Activated naive CD4-positive, alpha-beta T cell treated with anti-CD3 and anti-CD28 coated beads for 36 hours (primary cell): ENCODE measurements at regions of chr11 and their contacts with region 1.

Region 1: DNA sequence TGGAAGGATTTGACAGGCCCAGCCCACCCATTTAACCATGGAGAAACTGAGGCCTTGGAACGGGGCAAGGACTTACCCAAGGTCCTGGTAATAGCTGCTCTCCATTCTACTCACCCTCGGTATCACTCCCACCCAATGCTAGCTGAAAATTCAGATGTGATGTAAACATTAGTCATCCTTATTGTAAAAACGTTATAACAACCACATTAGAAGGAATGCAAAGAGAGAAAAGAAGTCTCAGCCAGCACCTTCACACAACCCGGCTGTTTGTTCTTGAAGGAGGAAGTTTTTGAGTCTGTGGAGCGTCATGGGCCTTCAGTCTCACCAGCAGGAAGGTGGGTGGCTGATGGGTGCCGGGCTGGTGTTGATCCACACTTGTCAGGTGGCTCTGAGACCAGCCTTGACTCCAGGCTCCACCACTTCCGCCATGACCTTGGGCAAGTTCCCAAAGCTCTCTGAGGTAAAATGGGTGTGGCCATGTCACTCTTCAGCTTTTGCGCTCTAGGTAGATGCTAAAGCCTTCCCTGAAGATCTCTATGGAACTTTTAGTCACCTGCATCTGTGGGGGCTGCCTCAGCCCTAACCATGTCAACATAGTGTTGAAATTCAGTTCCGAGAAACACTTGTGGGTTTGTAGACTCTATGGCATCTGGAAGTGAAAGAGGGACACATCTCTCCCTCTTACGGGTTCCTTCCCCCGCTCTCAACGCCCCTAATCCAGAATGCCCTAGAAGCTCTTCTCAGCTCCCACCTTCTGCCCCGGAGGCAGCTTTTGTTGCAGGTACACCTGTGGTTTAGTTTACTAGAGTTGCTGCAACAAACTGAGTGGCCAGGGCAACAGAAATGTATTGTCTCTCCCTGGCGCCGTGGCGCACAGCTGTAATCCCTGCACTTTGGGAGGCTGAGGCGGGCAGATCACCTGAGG is 14.8 kb downstream of the CD6 start:
- DNase-seq: peak; percentile 97
- H3K4me3 Mint-ChIP-seq: peak overlapping the region; percentile 77
- H3K27ac Mint-ChIP-seq: peak overlapping the region; percentile 97
- H3K4me1 Mint-ChIP-seq: peaks cover 90% of the 10 kb centered on the region
- H3K27me3 Mint-ChIP-seq: no peaks in the 10 kb centered on the region

Region 2: GRCh38 chr11:59560702-59561469 is 1425.4 kb before region 1 on chr11:
- CTCF ChIA-PET with region 1: no interaction called
- intact Hi-C with region 1: loop called (anchors 2 kb)
- DNase-seq: peak; percentile 90
- H3K4me3 Mint-ChIP-seq: peak overlapping the region; percentile 93
- H3K27ac Mint-ChIP-seq: peak overlapping the region; percentile 97
- H3K4me1 Mint-ChIP-seq: peaks cover 47% of the 10 kb centered on the region
- H3K27me3 Mint-ChIP-seq: peaks cover 4% of the 10 kb centered on the region

Region 3: DNA sequence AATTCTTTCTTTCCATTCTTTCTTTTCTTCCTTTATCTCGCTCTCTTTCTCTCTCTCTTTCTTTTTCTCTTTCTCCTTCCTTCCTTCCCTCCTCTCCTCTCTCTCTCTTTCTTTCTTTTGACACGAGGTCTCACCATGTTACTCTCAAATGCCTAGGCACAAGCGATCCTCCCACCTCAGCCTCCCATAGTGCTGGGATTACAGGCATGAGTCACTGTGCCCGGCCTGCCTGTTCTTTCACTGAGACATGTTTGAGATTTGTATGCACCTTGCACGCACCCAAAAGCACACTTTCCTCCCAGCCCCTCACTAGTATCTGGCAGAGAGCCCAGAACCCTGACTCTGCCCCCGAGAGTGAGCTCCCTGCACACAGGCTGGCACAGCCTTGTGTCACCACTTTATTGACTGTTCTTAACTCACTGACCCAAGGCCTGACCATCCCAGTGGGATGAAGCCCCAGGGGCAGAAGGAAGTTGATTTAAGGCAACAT is 42.1 kb after region 1 on chr11:
- CTCF ChIA-PET with region 1: interaction called, 3 read pairs
- intact Hi-C with region 1: loop called (anchors 1 kb)
- DNase-seq: peak; percentile 93
- H3K4me3 Mint-ChIP-seq: peak overlapping the region; percentile 87
- H3K27ac Mint-ChIP-seq: peak overlapping the region; percentile 100
- H3K4me1 Mint-ChIP-seq: peaks cover 82% of the 10 kb centered on the region
- H3K27me3 Mint-ChIP-seq: no peaks in the 10 kb centered on the region

Region 4: DNA sequence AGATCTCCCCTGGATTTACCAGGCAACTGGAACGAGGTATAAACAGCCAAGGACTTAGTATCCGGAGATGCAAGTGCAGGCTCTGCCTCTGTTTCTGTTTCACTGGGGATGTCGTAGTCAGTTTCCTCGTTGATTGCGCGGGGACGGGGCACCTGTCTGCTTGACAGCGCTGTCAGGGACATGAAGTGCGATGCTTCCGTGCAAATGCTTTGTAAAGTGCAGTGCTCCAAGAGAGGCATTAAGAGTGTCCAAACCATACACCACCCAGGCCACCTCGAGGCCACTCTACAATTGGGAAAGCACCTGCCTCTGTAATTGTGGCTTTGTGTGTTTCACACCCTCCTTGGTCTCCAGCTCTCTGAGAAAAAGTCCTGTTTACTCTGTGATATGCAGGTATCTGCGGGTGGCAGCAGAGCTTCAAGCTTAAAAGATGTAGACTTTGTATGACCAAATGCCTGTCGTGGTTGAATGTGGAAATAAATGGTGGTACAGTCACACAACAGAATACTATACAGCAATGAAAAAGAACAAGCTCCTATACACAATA is 97.4 kb after region 1 on chr11:
- CTCF ChIA-PET with region 1: interaction called, 6 read pairs
- intact Hi-C with region 1: loop called (anchors 5 kb)
- DNase-seq: peak; percentile 89
- H3K4me3 Mint-ChIP-seq: peak overlapping the region; percentile 76
- H3K27ac Mint-ChIP-seq: peak overlapping the region; percentile 99
- H3K4me1 Mint-ChIP-seq: peaks cover 70% of the 10 kb centered on the region
- H3K27me3 Mint-ChIP-seq: no peaks in the 10 kb centered on the region

Region 5: GRCh38 chr11:61102667-61103571 is 116.7 kb after region 1 on chr11:
- CTCF ChIA-PET with region 1: no interaction called
- intact Hi-C with region 1: loop called (anchors 2 kb)
- DNase-seq: peak; percentile 67
- H3K4me3 Mint-ChIP-seq: no peak overlapping the region
- H3K27ac Mint-ChIP-seq: no peak overlapping the region
- H3K4me1 Mint-ChIP-seq: peaks cover 31% of the 10 kb centered on the region
- H3K27me3 Mint-ChIP-seq: no peaks in the 10 kb centered on the region

Region 6: DNA sequence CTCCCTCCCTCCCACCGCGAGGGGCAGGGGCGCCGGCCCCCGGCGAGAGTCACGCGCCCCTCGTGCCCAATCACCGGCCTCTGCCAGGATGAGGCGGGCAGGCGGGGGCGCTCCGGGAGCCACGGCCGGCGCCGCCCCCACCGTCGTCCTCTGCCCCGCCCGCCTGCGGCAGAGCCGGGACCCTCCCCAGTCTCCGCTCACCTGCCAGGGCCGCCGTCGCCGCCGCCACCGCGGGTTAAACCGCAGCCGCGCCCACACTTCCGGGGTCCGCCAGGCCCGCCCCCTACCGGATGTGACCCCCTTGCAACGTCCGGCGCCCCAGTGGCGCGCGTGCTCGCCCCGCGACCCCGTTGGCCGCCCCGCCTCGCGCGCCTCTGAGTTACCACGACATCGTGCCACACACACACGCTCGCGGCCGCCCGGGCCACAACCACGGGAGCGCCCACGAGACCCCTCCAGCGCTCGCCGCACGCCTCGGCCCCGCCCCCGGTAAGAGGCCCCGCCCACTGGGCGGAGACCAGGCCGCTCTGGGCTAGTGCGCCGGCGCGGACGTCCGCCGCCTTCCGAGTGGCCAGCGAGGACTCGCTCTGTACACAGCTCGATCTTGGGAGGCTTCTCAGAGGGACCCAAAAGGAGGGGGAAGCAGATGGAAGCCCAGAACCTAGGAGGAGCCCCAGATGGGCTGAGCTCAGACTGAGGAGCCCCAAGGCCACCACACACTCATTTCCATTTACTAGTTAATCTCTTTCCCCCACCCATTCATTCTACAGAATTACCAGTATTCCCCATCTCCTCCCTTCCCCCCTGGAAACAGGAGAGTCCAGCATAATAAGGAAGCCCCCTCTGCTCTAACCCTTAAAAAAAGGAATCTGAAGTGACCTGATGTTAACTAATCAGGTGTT is 175.2 kb after region 1 on chr11 and contains the start of gene VPS37C:
- CTCF ChIA-PET with region 1: no interaction called
- intact Hi-C with region 1: loop called (anchors 5 kb)
- DNase-seq: peak; percentile 91
- H3K4me3 Mint-ChIP-seq: peak within 1 kb of the TSS; percentile 94
- H3K27ac Mint-ChIP-seq: peak within 1 kb of the TSS; percentile 93
- H3K4me1 Mint-ChIP-seq: peaks cover 62% of the 10 kb centered on the region
- H3K27me3 Mint-ChIP-seq: no peaks in the 10 kb centered on the region
- total RNA-seq, gene VPS37C: 8.5 to 8.9 TPM

Region 7: GRCh38 chr11:61201476-61201875 is 215.2 kb after region 1 on chr11:
- CTCF ChIA-PET with region 1: no interaction called
- intact Hi-C with region 1: no loop called
- DNase-seq: no peak
- H3K4me3 Mint-ChIP-seq: no peak overlapping the region
- H3K27ac Mint-ChIP-seq: no peak overlapping the region
- H3K4me1 Mint-ChIP-seq: no peaks in the 10 kb centered on the region
- H3K27me3 Mint-ChIP-seq: peaks cover 2% of the 10 kb centered on the region